ENCODE measurements at regions of chr14 and their contacts with region 1.

Region 1: GRCh38 chr14:77067632-77068514 is 30.2 kb upstream of the CIPC start:
- DNase-seq: peak; percentile 81 to 91
- H3K4me3 ChIP-seq: no peak overlapping the region
- H3K27ac ChIP-seq: no peak overlapping the region
- H3K4me1 ChIP-seq: peaks cover 5 to 27% (median 19%) of the 10 kb centered on the region in 4 donors
- H3K27me3 ChIP-seq: no peaks in the 10 kb centered on the region
- CTCF ChIP-seq: peak in 5 of 7 experiments; percentile 75 to 92 (median 83)
- EP300 ChIP-seq: no peak
- POLR2A ChIP-seq: no peak

Region 2: GRCh38 chr14:76876076-76876475 is 191.8 kb before region 1 on chr14:
- intact Hi-C with region 1: loop called (anchors 5 kb)
- DNase-seq: peak; percentile 67 to 88
- H3K4me3 ChIP-seq: no peak overlapping the region
- H3K27ac ChIP-seq: no peak overlapping the region
- H3K4me1 ChIP-seq: no peaks in the 10 kb centered on the region
- H3K27me3 ChIP-seq: no peaks in the 10 kb centered on the region
- CTCF ChIP-seq: peak in 5 of 7 experiments; percentile 83 to 97 (median 93)
- EP300 ChIP-seq: no peak
- POLR2A ChIP-seq: no peak

Region 3: DNA sequence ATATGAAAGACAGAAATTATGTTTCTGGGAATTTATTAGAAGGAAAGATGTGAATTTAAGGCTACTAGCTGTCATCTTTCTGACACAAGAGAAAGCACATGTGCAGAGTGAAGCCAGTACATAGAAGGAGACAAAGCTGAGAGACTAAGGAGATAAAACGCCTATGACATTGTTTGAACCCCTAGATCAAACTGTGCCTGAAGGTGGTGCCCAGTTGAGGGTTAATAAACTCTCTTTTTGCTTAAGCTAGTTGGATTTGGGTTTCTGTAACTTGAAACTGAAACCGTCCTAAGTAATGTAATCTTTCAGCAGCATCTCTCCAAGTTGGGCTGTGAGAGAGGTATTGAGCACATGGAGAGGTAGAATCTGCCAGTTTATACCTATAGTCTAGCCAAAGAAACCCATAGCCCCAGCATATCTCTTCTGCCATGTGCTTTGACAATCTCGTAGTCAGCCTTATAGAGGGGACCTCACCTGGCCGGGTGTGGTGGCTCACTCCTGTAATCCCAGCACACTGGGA is 157.4 kb before region 1 on chr14:
- intact Hi-C with region 1: loop called (anchors 5 kb)
- DNase-seq: no peak
- H3K4me3 ChIP-seq: no peak overlapping the region
- H3K27ac ChIP-seq: no peak overlapping the region
- H3K4me1 ChIP-seq: peaks cover 15 to 30% (median 21%) of the 10 kb centered on the region in 4 donors
- H3K27me3 ChIP-seq: no peaks in the 10 kb centered on the region
- CTCF ChIP-seq: no peak
- EP300 ChIP-seq: no peak
- POLR2A ChIP-seq: no peak

Measured in stomach (tissue), 19 donors.